Caco-2 (cell line): ENCODE measurements at regions of chr5 and their contacts with region 1.

Region 1: GRCh38 chr5:55691265-55692105 is 20.6 kb downstream of the SLC38A9 start:
- DNase-seq: peak in 1 of 2 experiments; percentile 55
- H3K4me3 ChIP-seq: no peak overlapping the region
- H3K4me3 Mint-ChIP-seq: no peak overlapping the region
- H3K27ac Mint-ChIP-seq: peak overlapping the region; percentile 21
- H3K4me1 ChIP-seq: peaks cover 24% of the 10 kb centered on the region
- H3K4me1 Mint-ChIP-seq: peaks cover 23% of the 10 kb centered on the region
- H3K27me3 ChIP-seq: no peaks in the 10 kb centered on the region
- H3K27me3 Mint-ChIP-seq: no peaks in the 10 kb centered on the region
- CTCF ChIP-seq: peak; percentile 49 to 68

Region 2: DNA sequence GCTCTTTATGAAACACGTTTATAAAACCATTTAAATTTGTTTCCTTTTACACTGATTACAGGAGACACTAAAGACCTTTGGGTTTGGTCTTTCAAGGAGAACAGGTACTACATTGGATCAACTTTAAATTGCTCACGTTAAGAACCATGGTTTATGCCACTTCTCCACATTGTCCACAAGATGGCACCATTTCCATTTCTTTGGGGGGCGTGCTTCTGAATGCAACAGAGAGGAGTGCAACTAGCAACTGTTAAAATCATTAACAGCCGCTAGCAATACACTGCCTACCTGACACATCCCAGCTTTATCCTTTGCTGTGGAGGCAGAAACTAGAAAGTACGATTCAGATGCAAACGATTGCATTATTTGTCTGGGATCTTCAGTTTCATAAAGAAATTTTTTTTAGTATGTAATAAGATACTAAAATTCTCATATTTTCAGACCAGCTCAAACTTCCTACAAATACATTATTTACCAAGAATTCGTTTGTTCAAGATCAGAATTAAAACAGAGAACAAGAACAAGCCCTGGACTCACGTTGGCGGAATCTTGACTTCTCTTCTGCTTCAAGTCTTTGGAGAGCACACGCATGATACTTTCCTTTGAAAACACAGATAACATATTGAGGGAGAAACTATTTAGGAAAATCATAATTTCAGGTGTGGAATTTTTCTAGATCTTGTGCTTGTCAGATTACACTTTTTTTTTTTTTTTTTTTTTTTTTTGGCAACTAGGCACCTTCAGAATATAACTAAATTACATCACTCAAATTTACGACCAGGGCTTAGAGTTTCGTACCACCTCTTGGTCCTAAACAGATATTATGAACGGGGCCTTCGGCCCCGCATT is 519.2 kb before region 1 on chr5:
- CTCF ChIA-PET with region 1: no interaction called
- POLR2A ChIA-PET with region 1: no interaction called
- intact Hi-C with region 1: loop called (anchors 1 kb)
- DNase-seq: peak; percentile 65 to 75
- H3K4me3 ChIP-seq: peak overlapping the region; percentile 50
- H3K4me3 Mint-ChIP-seq: peak overlapping the region; percentile 89
- H3K27ac Mint-ChIP-seq: no peak overlapping the region
- H3K4me1 ChIP-seq: peaks cover 11% of the 10 kb centered on the region
- H3K4me1 Mint-ChIP-seq: peaks cover 8% of the 10 kb centered on the region
- H3K27me3 ChIP-seq: peaks cover 3% of the 10 kb centered on the region
- H3K27me3 Mint-ChIP-seq: peaks cover 12% of the 10 kb centered on the region
- CTCF ChIP-seq: peak; percentile 73 to 74

Region 3: GRCh38 chr5:55307383-55308253 is 383.9 kb before region 1 on chr5 and contains the starts of genes DHX29 and MTREX:
- CTCF ChIA-PET with region 1: interaction called, 10 read pairs
- POLR2A ChIA-PET with region 1: no interaction called
- intact Hi-C with region 1: no loop called
- DNase-seq: peak; percentile 93 to 95
- H3K4me3 ChIP-seq: peak within 1 kb of the TSS; percentile 70
- H3K4me3 Mint-ChIP-seq: no peak within 1 kb of the TSS
- H3K27ac Mint-ChIP-seq: no peak within 1 kb of the TSS
- H3K4me1 ChIP-seq: peaks cover 22% of the 10 kb centered on the region
- H3K4me1 Mint-ChIP-seq: peaks cover 7% of the 10 kb centered on the region
- H3K27me3 ChIP-seq: no peaks in the 10 kb centered on the region
- H3K27me3 Mint-ChIP-seq: no peaks in the 10 kb centered on the region
- CTCF ChIP-seq: no peak
- total RNA-seq, gene DHX29: 27.6 and 31.6 TPM in 2 replicates
- total RNA-seq, gene MTREX: 83.7 and 95.2 TPM in 2 replicates

Region 4: GRCh38 chr5:55344392-55344992 is 347.0 kb before region 1 on chr5:
- CTCF ChIA-PET with region 1: interaction called, 3 read pairs
- POLR2A ChIA-PET with region 1: no interaction called
- intact Hi-C with region 1: loop called (anchors 1 kb)
- DNase-seq: peak; percentile 59 to 76
- H3K4me3 ChIP-seq: no peak overlapping the region
- H3K4me3 Mint-ChIP-seq: no peak overlapping the region
- H3K27ac Mint-ChIP-seq: no peak overlapping the region
- H3K4me1 ChIP-seq: no peaks in the 10 kb centered on the region
- H3K4me1 Mint-ChIP-seq: no peaks in the 10 kb centered on the region
- H3K27me3 ChIP-seq: no peaks in the 10 kb centered on the region
- H3K27me3 Mint-ChIP-seq: no peaks in the 10 kb centered on the region
- CTCF ChIP-seq: peak; percentile 82 to 86

Region 5: DNA sequence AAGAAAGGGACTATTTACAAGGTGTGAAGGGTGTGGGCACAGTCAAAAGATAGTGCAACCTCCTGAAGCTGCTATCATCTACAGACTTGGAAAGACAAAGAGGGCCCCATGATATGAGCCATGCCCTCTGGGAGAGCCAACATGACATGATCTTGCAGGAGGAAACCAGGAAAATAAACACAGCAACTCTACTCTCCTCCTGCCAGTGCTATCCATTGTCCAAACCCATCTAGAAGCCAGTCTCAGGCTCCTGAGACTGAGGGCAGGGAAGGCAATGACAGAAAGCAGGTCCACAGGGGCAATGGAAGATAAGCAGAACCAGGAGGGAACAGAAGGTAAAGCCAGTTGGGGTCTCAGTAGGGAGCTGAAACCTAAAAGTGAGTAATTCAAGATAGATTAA is 193.8 kb before region 1 on chr5:
- CTCF ChIA-PET with region 1: interaction called, 6 read pairs
- POLR2A ChIA-PET with region 1: no interaction called
- intact Hi-C with region 1: loop called (anchors 10 kb)
- DNase-seq: no peak
- H3K4me3 ChIP-seq: no peak overlapping the region
- H3K4me3 Mint-ChIP-seq: no peak overlapping the region
- H3K27ac Mint-ChIP-seq: no peak overlapping the region
- H3K4me1 ChIP-seq: no peaks in the 10 kb centered on the region; the same call in 1 of the 2 replicates
- H3K4me1 Mint-ChIP-seq: peaks cover 38% of the 10 kb centered on the region
- H3K27me3 ChIP-seq: no peaks in the 10 kb centered on the region
- H3K27me3 Mint-ChIP-seq: no peaks in the 10 kb centered on the region
- CTCF ChIP-seq: no peak

Region 6: GRCh38 chr5:55577353-55578060 is 114.0 kb before region 1 on chr5:
- CTCF ChIA-PET with region 1: interaction called, 4 read pairs
- POLR2A ChIA-PET with region 1: no interaction called
- intact Hi-C with region 1: loop called (anchors 10 kb)
- DNase-seq: no peak
- H3K4me3 ChIP-seq: no peak overlapping the region
- H3K4me3 Mint-ChIP-seq: no peak overlapping the region
- H3K27ac Mint-ChIP-seq: peak overlapping the region; percentile 23
- H3K4me1 ChIP-seq: peaks cover 49% of the 10 kb centered on the region
- H3K4me1 Mint-ChIP-seq: peaks cover 28% of the 10 kb centered on the region
- H3K27me3 ChIP-seq: no peaks in the 10 kb centered on the region
- H3K27me3 Mint-ChIP-seq: no peaks in the 10 kb centered on the region
- CTCF ChIP-seq: no peak

Region 7: GRCh38 chr5:56200856-56201666 is 509.6 kb after region 1 on chr5:
- CTCF ChIA-PET with region 1: interaction called, 3 read pairs
- POLR2A ChIA-PET with region 1: no interaction called
- intact Hi-C with region 1: loop called (anchors 5 kb)
- DNase-seq: peak; percentile 84 to 85
- H3K4me3 ChIP-seq: no peak overlapping the region
- H3K4me3 Mint-ChIP-seq: no peak overlapping the region
- H3K27ac Mint-ChIP-seq: peak overlapping the region; percentile 42
- H3K4me1 ChIP-seq: peaks cover 21% of the 10 kb centered on the region
- H3K4me1 Mint-ChIP-seq: peaks cover 18% of the 10 kb centered on the region
- H3K27me3 ChIP-seq: no peaks in the 10 kb centered on the region
- H3K27me3 Mint-ChIP-seq: no peaks in the 10 kb centered on the region
- CTCF ChIP-seq: peak; percentile 73 to 93